Cardiac septum (tissue), 1 donor: ENCODE measurements at regions of chr13 and their contacts with region 1.

Region 1: GRCh38 chr13:52450012-52450792 is at the start of gene VPS36:
- DNase-seq: peak; percentile 98
- total RNA-seq, gene VPS36: 30.2 TPM

Region 2: GRCh38 chr13:52194184-52194868 is 255.9 kb before region 1 on chr13:
- intact Hi-C with region 1: loop called (anchors 10 kb)
- DNase-seq: peak; percentile 93

Region 3: GRCh38 chr13:52348071-52348470 is 102.1 kb before region 1 on chr13:
- intact Hi-C with region 1: loop called (anchors 1 kb)
- DNase-seq: no peak

Region 4: DNA sequence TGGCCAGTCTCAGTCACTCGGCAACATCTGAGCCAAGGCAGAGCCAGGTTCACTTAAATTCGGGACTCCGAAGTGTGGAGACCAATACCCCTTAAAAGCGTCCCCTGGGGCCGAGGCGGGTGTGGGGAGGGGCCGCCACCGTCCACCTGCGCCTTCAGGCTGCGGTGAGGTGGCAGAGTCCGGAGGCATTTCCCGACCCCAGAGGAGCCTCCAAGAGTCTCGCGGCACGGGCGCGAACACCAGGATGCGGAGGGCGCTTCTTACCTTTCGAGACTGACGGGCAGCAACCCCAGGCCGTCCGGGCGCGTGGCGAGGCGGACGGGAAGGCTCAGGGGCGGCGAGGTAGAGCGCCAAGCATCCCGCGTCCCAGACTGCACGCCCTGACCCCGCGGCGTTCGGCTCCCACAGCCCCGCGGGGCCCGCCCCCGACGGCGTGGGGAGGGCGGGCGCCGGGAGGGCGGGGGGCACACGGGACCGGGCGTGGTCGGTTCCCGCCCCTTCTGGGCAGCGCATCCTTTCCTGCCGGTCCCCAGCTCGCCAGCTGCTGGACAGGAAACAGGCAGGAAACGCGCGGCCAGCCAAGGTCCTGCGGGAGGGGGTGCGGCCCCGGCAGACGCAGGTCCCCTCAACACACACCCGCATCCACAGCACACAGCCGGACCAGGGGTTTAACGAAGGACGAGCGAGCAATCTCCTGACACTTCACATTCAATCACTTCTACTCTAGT is 44.3 kb before region 1 on chr13 and contains the start of gene THSD1:
- intact Hi-C with region 1: loop called (anchors 2 kb)
- DNase-seq: peak; percentile 85
- total RNA-seq, gene THSD1: 6.8 TPM